Adrenal gland (tissue), 19 donors: ENCODE measurements at regions of chr10 and their contacts with region 1.

Region 1: GRCh38 chr10:87861953-87862678 is 1.2 kb downstream of the KLLN start:
- DNase-seq: peak; percentile 96 to 99 (median 97)
- H3K4me3 ChIP-seq: peak overlapping the region; percentile 56 to 90 (median 78)
- H3K27ac ChIP-seq: peak overlapping the region; percentile 75 to 97 (median 94)
- H3K4me1 ChIP-seq: peaks cover 0 to 15% of the 10 kb centered on the region in 2 donors
- H3K27me3 ChIP-seq: no peaks in the 10 kb centered on the region
- CTCF ChIP-seq: peak in 2 of 6 experiments; percentile 21 to 33
- POLR2A ChIP-seq: peak; percentile 77 to 91

Region 2: DNA sequence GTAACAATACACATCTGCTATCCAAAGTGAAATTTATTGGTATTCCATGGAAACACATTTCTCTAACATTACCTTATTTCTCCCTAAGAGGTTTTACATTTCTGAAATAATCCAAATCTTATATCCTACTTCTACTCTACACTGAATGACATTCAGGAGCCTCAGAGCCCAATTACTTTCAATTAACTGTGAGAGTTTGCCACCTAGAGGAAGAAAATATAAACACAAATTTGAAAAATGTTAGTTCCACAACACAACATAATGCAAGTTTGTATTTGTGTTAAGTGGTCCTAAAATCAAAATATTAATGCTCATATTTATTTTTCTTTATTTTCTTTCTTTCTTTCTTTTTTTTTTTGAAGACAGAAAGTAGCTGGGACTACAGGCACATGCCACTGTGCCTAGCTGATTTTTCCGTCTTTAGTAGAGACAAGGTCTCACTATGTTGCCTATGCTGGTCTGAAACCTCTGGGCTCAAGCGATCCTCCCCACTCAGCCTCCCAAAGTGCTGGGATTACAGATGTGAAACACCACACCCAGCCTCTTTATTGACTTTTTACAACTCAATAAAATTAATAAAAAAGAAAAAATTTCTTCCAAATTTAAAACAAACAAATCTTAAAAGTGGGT is 90.1 kb before region 1 on chr10:
- intact Hi-C with region 1: no loop called
- DNase-seq: no peak
- H3K4me3 ChIP-seq: no peak overlapping the region
- H3K27ac ChIP-seq: no peak overlapping the region
- H3K4me1 ChIP-seq: peaks cover 7 to 10% of the 10 kb centered on the region in 2 donors
- H3K27me3 ChIP-seq: no peaks in the 10 kb centered on the region
- CTCF ChIP-seq: peak; percentile 34 to 70 (median 56)
- POLR2A ChIP-seq: no peak

Region 3: GRCh38 chr10:88114368-88114767 is 252.3 kb after region 1 on chr10:
- intact Hi-C with region 1: loop called in 1 of 2 experiments (anchors 10 kb)
- DNase-seq: peak; percentile 40 to 81 (median 58)
- H3K4me3 ChIP-seq: no peak overlapping the region
- H3K27ac ChIP-seq: no peak overlapping the region
- H3K4me1 ChIP-seq: peaks cover 0 to 3% of the 10 kb centered on the region in 2 donors
- H3K27me3 ChIP-seq: no peaks in the 10 kb centered on the region
- CTCF ChIP-seq: peak; percentile 28 to 70 (median 56)
- POLR2A ChIP-seq: no peak

Region 4: DNA sequence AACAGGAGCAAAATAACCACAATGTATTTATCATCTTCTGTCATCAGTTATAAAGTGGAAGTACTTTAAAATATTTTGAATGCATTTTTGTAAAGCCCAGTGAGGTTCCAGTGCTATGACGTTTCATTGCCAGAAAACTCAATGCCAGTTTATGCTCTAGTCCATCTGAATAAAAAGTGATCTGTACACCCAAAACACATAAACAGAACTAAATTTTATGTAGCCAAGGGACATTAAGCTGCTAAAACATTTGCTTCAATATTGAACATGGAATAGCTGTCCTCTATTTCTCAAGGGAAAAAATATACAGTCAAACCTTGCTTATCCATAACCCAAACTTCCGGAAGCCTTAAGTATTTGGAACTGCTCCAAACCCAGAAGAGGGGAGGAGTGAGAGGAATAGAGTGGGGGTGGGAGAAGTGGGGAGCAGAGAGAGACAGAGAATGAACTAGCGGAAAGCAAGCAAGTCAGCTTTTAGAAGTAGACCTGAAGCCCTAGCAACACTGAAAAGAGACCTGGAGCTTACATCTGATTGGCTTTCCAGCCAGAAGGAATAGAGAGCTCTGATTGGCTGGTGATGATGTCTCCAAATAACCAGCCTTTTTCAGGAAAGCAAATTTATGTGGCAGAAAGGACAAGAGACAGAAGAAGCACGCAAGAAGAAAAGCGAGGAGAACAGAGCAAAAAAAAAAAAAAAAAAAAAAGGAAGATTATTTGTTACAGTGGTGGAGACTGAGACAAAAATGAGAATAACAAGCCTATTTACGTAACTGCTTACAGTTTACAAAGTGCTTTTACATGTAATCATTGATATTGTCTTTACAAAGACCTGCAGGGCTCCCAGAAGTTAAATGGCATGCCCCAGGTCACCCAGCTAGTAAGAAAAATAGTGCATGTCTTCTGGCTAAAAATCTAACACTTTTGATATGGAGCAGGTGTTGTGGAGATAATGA is 525.0 kb after region 1 on chr10:
- intact Hi-C with region 1: loop called (anchors 5 to 10 kb)
- DNase-seq: peak; percentile 61 to 86 (median 76)
- H3K4me3 ChIP-seq: peak overlapping the region in 3 of 4 donors; percentile 18 to 37 (median 35)
- H3K27ac ChIP-seq: peak overlapping the region; percentile 50 to 85 (median 73)
- H3K4me1 ChIP-seq: peaks cover 22 to 48% of the 10 kb centered on the region in 2 donors
- H3K27me3 ChIP-seq: no peaks in the 10 kb centered on the region
- CTCF ChIP-seq: no peak
- POLR2A ChIP-seq: peak; percentile 17 to 88